ENCODE measurements at regions of chr9 and their contacts with region 1.

Region 1: DNA sequence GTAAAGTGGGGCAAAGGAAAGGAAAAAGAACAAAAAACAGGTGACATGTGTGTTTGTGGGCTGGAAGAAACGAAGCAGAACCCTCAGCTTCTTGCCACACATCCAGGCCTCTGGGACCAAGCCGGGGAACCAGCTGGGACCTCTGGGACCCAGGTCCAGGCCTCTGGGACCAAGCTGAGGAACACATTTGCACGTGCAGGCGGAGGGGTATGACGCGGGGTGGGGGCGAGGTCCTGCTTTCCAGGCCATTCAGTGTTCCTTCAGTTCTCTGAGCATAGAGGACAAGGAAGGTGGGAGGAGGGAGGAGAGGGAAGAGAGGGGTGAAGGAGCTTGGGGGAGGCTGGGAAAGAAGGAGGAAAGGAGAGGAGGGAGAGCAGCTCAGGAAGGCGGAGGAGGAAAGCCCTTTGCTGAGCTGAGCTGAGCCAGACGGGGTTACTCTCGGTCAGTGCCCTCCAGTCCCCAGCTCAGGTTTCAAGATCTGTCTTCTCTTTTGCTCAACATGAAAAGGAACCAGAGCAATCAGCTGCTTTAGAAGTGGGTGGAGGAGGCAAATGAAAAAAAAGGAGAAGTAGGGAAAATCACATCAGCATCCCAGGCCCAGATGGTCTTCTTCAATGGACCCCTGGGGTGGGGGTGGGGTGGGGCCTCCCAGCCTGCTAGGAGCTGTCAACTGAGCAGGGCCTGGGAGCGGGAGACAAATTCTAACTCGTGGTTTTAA is 59.1 kb downstream of the ABCA1 start:
- DNase-seq: peak; percentile 73
- ATAC-seq: peak; percentile 91

Region 2: GRCh38 chr9:104774831-104775573 is 93.8 kb before region 1 on chr9:
- intact Hi-C with region 1: no loop called
- DNase-seq: no peak
- ATAC-seq: peak; percentile 82

Region 3: DNA sequence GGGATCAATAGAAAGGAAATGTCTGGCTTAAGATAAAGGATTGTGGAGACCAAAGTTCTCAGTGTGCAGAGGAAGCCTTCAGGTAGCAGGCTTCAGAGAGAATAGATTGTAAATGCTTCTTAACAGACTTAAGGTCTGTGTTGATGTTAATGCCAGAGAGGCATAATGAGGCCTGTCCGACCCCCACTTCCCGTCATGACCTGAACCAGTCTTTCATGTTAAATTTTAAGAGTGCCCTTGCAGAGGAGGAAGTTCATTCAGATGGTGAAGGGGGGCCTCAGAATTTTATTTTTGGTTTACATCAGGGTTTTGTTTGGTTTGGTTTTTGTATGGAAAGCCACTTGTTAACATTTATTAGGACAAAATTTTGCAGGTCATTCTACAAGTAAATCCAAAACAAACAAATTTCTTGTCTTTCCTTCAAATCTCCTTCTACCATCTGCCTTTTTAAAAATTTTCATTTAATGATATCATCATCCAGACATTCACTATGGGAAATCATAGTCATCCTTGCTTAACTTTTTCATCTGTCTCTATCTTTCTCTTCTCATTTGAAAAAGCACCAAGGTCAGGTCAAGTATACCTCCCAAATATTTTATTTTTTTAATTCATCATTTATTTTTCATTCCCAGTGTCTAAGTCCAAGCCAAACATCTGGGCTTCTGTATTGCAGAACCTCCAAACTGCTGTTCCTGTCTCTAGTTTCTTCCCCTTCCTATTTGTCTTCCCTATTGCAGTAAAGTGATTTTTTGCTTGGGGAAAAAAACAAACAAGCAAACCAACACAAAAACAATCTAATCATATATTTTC is 66.0 kb after region 1 on chr9:
- intact Hi-C with region 1: no loop called
- DNase-seq: no peak
- ATAC-seq: peak; percentile 38

Region 4: DNA sequence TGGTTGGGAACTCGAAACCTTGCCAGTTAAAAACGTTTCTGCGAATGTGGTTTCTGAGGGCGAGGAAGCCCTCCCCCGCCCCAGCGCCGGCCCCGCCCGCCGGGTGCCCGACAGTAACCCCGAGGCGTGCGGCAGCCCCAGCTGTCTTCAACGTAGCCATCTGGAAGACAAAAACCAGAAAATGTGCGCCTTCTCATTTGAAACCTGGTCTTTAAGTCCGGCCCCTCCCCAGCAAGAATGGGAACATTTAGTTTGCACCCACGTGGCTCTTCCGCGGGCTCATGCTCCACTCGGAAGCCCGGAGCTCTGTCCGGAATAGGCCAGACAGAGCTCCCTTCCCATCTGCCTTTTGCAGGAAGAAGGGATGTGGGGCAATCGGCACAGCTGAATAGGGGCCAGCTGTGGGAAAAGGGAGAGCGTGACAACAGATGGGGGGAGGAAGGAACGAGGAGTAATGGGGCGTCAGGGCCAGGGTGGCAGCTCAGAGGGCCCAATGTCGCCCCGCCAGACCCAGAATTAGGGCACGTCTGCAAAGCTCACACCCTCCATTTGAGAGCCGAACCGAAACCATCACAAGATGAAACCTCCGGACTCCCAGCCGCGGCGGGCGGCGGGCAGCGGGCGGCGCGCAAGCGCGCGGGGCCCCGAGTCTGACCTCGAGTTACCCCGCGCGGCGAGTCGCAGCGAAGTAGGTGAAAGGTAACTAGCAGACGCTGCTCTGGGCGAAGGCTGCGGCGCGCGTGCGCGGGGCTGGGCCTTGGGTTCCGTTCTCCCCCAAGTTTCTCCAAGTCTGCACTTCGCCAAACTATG is 122.5 kb after region 1 on chr9:
- intact Hi-C with region 1: loop called (anchors 5 kb)
- DNase-seq: peak; percentile 96
- ATAC-seq: peak; percentile 86

Measured in left ventricle myocardium superior (tissue), 1 donor.